Heart right ventricle (tissue), 16 donors: ENCODE measurements at regions of chr2 and their contacts with region 1.

Region 1: DNA sequence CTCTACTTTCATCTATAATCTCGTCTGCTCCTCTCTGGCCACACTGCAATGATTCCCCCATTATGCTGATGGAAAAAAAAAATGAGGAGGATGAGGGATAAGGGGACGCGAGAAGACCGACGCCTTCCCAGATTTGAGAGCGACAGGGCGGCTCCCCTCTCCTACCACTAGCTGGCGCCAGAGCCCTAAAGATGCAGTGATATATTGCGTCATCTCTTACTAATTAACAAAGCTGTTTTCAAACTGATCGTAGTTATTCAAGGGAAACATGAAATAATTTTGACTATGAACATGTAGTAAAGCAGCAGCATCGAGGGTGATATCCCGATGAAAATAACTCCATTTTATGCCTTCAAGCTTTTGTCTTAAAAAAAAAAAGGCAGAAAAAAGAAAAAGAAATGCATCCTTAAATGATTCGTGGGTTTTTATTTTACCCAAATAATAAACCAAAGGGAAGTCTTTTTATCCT is 48.0 kb upstream of the HNRNPA3 start:
- DNase-seq: peak; percentile 81 to 85
- ATAC-seq: peak; percentile 84 to 93 (median 92)
- H3K4me3 ChIP-seq: peak overlapping the region in 9 of 10 donors; percentile 21 to 64 (median 49)
- H3K27ac ChIP-seq: peak overlapping the region; percentile 74 to 90 (median 88)
- H3K4me1 ChIP-seq: peaks cover 8 to 33% (median 21%) of the 10 kb centered on the region in 9 donors
- H3K27me3 ChIP-seq: no peaks in the 10 kb centered on the region
- CTCF ChIP-seq: peak in 8 of 9 donors; percentile 96 to 100 (median 99)

Region 2: DNA sequence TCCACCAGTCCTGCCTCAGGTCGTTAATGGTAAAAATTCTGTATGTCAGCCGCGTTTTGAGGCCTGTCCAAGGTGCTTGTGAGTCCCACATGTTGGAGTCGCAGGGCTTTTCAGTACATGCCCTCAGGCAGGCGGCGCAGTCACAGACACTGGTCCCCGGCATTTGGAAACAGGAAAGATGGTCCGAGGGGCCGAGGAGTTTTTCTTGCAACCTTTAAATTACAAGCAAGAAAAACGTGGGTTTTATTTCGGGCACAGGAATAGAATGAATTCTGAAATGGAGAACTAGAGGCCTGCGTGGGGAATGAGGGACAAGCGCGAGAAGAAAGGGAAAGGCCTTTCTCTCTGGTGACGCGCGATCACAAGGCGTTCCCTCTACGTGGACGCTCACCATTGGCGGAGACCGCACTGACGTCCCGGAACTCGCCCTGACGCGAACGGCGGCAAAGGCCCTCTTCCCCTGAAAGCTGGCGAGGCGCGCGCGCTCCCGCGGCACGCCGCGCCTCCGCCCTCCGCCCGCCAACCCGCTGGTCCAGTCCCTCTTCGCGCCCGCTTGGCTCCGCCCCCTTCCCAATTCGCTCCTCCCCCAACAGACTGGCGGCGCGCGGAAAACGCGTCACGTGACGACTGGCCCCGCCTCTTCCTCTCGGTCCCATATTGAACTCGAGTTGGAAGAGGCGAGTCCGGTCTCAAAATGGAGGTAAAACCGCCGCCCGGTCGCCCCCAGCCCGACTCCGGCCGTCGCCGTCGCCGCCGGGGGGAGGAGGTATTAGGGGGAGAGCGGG is 47.7 kb after region 1 on chr2 and contains the start of gene HNRNPA3:
- intact Hi-C with region 1: loop called in 6 of 10 experiments (anchors 1 to 5 kb)
- DNase-seq: peak; percentile 99 to 100
- ATAC-seq: peak; percentile 95 to 97 (median 96)
- H3K4me3 ChIP-seq: peak within 1 kb of the TSS; percentile 69 to 96 (median 86)
- H3K27ac ChIP-seq: peak within 1 kb of the TSS; percentile 93 to 100 (median 99)
- H3K4me1 ChIP-seq: peaks cover 8 to 53% (median 48%) of the 10 kb centered on the region in 9 donors
- H3K27me3 ChIP-seq: no peaks in the 10 kb centered on the region
- CTCF ChIP-seq: peak in 7 of 9 donors; percentile 16 to 60 (median 29)
- total RNA-seq, gene HNRNPA3: 63.7 to 93.8 (median 77.6) TPM

Region 3: DNA sequence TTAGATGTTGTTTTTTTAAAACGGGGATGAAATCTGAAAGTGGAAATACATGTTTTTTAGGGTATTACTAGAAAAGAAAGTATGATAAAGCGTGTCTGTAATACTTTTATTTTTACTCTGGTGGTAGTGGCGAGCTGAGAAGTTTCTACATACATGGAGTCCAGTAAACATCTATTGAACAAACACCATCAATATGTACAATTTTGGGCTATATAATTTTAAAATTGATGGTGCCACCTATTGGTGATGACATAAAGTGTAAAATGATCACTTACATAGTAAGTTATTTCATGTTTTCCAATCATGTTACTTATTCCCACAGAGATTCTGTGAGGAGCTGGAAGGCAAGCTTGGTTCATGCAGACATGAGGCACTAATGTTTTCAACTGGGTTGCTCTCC is 131.4 kb after region 1 on chr2:
- intact Hi-C with region 1: loop called (anchors 2 to 10 kb)
- DNase-seq: no peak
- ATAC-seq: peak in 5 of 8 donors; percentile 38 to 74 (median 54)
- H3K4me3 ChIP-seq: peak overlapping the region in 1 of 10 donors; percentile 12
- H3K27ac ChIP-seq: peak overlapping the region in 6 of 10 donors; percentile 5 to 63 (median 52)
- H3K4me1 ChIP-seq: peaks cover 0 to 14% (median 8%) of the 10 kb centered on the region in 9 donors
- H3K27me3 ChIP-seq: no peaks in the 10 kb centered on the region
- CTCF ChIP-seq: peak in 8 of 9 donors; percentile 11 to 63 (median 52)

Region 4: DNA sequence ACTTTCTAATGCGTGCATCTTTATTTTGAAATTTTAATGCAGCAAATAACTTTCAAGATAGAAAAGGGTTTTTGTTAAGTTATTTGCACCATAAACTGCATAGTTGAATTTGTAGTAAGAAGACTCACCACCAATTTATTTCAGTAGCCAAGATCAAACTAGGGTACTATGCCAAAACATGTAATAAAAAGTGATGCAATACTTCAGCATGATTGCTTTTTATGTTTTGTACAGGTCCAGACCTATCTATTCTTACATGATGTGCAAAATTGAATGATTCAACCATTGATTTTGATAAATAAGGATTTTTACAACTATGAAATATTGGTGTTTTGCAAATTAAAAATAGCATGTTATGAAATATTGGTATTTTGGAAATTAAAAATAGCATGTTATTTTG is 254.7 kb after region 1 on chr2:
- intact Hi-C with region 1: loop called in 7 of 10 experiments (anchors 2 to 10 kb)
- DNase-seq: no peak
- ATAC-seq: no peak
- H3K4me3 ChIP-seq: no peak overlapping the region
- H3K27ac ChIP-seq: no peak overlapping the region
- H3K4me1 ChIP-seq: peaks cover 0 to 36% (median 18%) of the 10 kb centered on the region in 9 donors
- H3K27me3 ChIP-seq: no peaks in the 10 kb centered on the region
- CTCF ChIP-seq: no peak

Region 5: DNA sequence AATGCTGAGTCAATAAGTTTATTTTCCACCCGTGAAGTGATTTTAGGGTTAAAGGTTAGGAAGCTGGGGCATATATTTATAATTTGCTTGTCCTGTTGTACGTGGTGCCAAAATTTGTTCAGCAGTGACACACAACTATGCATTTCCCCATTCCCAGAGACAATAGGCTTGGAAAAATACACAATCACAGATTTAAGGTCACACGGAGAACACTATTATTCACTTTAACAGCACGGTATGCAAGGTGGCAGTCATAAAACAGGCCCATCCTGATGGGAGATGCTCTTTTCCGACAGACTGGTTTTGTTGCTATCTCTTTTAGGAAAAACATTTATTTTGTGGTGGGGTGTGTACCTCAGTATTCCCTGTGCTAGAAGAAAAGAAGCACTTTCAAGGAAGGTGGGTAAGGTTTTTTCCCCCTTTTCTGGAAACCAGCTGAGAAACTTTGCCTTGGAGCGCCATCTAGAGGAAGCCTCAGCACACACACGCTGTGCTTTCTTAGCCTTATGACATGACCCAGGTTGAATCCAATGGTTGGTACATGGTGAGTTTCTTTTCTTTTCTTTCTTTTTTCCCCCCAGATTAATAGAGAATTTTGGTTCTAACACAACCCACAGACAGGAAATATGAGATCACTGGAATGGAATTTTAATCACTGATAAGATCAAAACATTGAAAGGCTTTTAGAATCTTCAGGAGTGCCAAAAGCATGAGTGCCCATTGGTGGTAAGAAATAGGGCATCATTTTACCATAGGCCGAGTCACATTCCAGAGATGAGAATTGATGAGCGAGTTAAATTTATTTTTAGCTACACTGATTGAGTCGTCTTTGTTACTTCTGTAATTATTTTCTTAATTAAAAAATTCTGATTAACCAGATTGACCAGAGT is 560.0 kb after region 1 on chr2:
- intact Hi-C with region 1: loop called in 4 of 10 experiments (anchors 10 kb)
- DNase-seq: peak; percentile 36 to 58
- ATAC-seq: peak; percentile 61 to 92 (median 74)
- H3K4me3 ChIP-seq: no peak overlapping the region
- H3K27ac ChIP-seq: peak overlapping the region in 2 of 10 donors; percentile 12 to 66
- H3K4me1 ChIP-seq: peaks cover 0 to 5% (median 0%) of the 10 kb centered on the region in 9 donors
- H3K27me3 ChIP-seq: no peaks in the 10 kb centered on the region
- CTCF ChIP-seq: peak; percentile 79 to 96 (median 88)